ENCODE measurements at regions of chr13 and their contacts with region 1.

Region 1: GRCh38 chr13:94660695-94661326 is 51.5 kb downstream of the SOX21 start:
- DNase-seq: no peak
- H3K4me3 Mint-ChIP-seq: no peak overlapping the region
- H3K27ac Mint-ChIP-seq: no peak overlapping the region
- H3K4me1 Mint-ChIP-seq: peaks cover 35% of the 10 kb centered on the region
- H3K27me3 Mint-ChIP-seq: peaks cover 16% of the 10 kb centered on the region

Region 2: DNA sequence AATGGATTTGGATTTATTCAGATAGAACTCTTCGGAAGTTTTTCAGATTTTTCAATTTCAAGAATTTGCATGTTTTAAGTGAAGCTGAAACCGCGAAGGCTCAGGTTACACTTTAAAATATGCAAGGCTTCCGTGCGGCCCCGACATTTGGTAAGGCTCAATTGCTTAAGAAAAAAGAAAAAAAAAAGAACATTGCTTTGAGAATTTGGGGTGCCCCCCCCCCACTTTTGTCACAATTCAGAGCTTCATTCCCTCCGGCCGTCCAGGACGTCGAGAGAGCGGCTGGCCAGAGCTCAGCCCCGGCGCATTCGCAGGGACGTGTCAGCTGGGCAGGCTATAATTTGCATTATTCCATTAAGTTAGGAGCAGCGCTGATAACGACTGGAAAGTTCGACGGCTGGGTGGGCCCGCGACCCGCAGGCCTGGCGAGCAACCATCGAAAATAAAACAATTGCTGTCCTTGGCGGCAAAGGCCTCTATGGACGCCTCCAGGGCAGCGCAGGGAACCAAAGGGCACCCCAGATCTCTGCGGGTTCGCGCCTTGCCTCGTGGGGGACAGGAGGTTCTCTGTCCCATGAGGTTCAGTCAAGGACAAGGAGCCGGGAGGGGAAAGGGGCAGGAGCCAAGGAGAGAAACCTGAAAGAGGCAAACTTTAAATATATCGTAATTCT is 44.4 kb after region 1 on chr13:
- intact Hi-C with region 1: loop called (anchors 2 kb)
- DNase-seq: no peak
- H3K4me3 Mint-ChIP-seq: no peak overlapping the region
- H3K27ac Mint-ChIP-seq: no peak overlapping the region
- H3K4me1 Mint-ChIP-seq: peaks cover 10% of the 10 kb centered on the region
- H3K27me3 Mint-ChIP-seq: peaks cover 87% of the 10 kb centered on the region

Region 3: DNA sequence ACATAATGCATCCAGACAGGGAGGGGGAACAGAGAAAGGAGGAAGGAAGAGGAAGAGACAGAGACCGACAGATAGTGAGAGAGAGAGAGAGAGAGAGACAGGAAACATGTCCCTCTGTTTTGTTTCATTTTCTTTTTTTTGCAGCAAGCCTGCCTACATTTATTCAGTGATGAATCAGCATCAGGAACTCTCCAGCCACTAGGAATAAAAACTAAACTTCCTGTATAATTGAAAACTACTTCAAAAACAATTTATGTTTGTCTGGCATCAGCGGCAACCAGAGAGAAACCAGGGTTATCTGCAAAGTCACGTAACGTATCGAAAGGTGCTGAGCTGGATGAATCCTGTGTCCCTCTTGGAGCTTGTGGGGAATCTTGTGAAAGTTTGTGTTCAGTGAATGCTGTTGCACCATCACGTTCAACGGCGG is 200.2 kb after region 1 on chr13:
- intact Hi-C with region 1: loop called (anchors 10 kb)
- DNase-seq: peak; percentile 64
- H3K4me3 Mint-ChIP-seq: peak overlapping the region; percentile 82
- H3K27ac Mint-ChIP-seq: peak overlapping the region; percentile 87
- H3K4me1 Mint-ChIP-seq: peaks cover 10% of the 10 kb centered on the region
- H3K27me3 Mint-ChIP-seq: peaks cover 12% of the 10 kb centered on the region

Measured in activated CD4-positive, alpha-beta T cell treated with anti-CD3 and anti-CD28 coated beads, Interleukin-2, amount 10 ng/mL, durations not matched to agents 24 days and 14 days (primary cell).